Testis (tissue), 5 donors: ENCODE measurements at regions of chr1 and their contacts with region 1.

Region 1: DNA sequence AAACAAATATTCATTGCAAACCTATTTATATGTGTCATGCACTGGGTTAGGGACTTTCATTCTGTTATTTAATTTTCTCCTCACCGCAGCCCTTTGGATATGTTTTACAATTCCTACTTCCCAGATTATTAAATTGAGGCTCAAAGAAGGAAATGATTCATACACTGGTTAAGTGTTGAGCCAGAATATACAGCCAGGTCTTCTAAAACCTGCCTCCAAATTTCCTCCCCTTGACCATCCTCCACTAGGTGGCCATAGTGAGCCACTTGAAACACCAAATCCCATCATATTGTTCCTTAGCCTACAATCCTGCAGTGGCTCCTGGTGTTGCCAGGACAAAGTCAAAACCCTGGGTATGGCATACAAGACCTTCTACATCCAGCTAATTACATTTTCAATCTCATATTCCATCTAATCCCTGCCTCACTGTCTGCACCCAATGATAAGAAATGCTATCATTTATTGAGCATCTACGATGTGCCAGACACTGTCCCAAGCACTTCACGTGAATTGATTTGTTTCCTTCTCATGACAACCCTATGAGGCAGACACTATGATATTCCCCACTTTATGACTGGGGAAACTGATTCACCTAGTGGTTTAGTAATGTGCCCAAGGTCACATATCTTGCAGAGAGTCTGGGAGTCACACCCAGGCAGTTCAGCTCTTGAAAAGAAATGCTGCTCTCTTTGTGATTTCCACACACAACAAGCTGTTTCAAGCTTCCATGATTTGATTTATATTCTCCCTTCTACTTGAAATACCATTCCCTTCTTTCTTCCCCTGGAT is 23.6 kb upstream of the KIRREL1 start:
- DNase-seq: peak; percentile 64
- H3K4me3 ChIP-seq: no peak overlapping the region
- H3K27ac ChIP-seq: no peak overlapping the region
- H3K4me1 ChIP-seq: no peaks in the 10 kb centered on the region
- H3K27me3 ChIP-seq: no peaks in the 10 kb centered on the region
- CTCF ChIP-seq: peak; percentile 19 to 82 (median 74)
- POLR2A ChIP-seq: no peak

Region 2: GRCh38 chr1:158124999-158125398 is 155.1 kb after region 1 on chr1:
- intact Hi-C with region 1: loop called (anchors 5 kb)
- DNase-seq: peak; percentile 95
- H3K4me3 ChIP-seq: no peak overlapping the region
- H3K27ac ChIP-seq: no peak overlapping the region
- H3K4me1 ChIP-seq: no peaks in the 10 kb centered on the region
- H3K27me3 ChIP-seq: no peaks in the 10 kb centered on the region
- CTCF ChIP-seq: peak; percentile 88 to 94 (median 91)
- POLR2A ChIP-seq: no peak